OCI-LY7 (cell line): ENCODE measurements at regions of chr7 and their contacts with region 1.

Region 1: GRCh38 chr7:100446040-100446439 is 9.7 kb upstream of the PPP1R35 start:
- DNase-seq: no peak
- H3K4me3 ChIP-seq: no peak overlapping the region
- H3K27ac ChIP-seq: no peak overlapping the region
- H3K4me1 ChIP-seq: peaks cover 29% of the 10 kb centered on the region
- CTCF ChIP-seq: no peak

Region 2: GRCh38 chr7:100374601-100375000 is 71.4 kb before region 1 on chr7:
- CTCF ChIA-PET with region 1: interaction called, 3 read pairs
- POLR2A ChIA-PET with region 1: no interaction called
- intact Hi-C with region 1: loop called (anchors 2 kb)
- DNase-seq: peak; percentile 22
- H3K4me3 ChIP-seq: peak overlapping the region; percentile 11
- H3K27ac ChIP-seq: no peak overlapping the region
- H3K4me1 ChIP-seq: peaks cover 45% of the 10 kb centered on the region
- CTCF ChIP-seq: no peak

Region 3: GRCh38 chr7:100407285-100408180 is 38.5 kb before region 1 on chr7:
- CTCF ChIA-PET with region 1: interaction called, 4 read pairs
- POLR2A ChIA-PET with region 1: interaction called, 5 read pairs
- intact Hi-C with region 1: loop called (anchors 2 kb)
- DNase-seq: peak; percentile 83
- H3K4me3 ChIP-seq: no peak overlapping the region
- H3K27ac ChIP-seq: no peak overlapping the region
- H3K4me1 ChIP-seq: peaks cover 33% of the 10 kb centered on the region
- CTCF ChIP-seq: peak; percentile 89

Region 4: GRCh38 chr7:100478966-100479665 is 33.1 kb after region 1 on chr7 and contains the start of gene TSC22D4:
- CTCF ChIA-PET with region 1: no interaction called
- POLR2A ChIA-PET with region 1: no interaction called
- intact Hi-C with region 1: loop called (anchors 2 kb)
- DNase-seq: peak; percentile 97
- H3K4me3 ChIP-seq: peak within 1 kb of the TSS; percentile 86
- H3K27ac ChIP-seq: peak within 1 kb of the TSS; percentile 75
- H3K4me1 ChIP-seq: peaks cover 40% of the 10 kb centered on the region
- CTCF ChIP-seq: no peak
- total RNA-seq, gene TSC22D4: 38.5 and 41.4 TPM in 2 replicates

Region 5: GRCh38 chr7:100586266-100587025 is 140.4 kb after region 1 on chr7 and contains the start of gene FBXO24:
- CTCF ChIA-PET with region 1: interaction called, 12 read pairs
- POLR2A ChIA-PET with region 1: no interaction called
- intact Hi-C with region 1: no loop called
- DNase-seq: peak; percentile 100
- H3K4me3 ChIP-seq: peak within 1 kb of the TSS; percentile 91
- H3K27ac ChIP-seq: peak within 1 kb of the TSS; percentile 92
- H3K4me1 ChIP-seq: peaks cover 29% of the 10 kb centered on the region
- CTCF ChIP-seq: no peak
- total RNA-seq, gene FBXO24: 0.16 TPM in 1 of 2 replicates, not detected in the other